ENCODE measurements at regions of chr9 and their contacts with region 1.

Region 1: GRCh38 chr9:127058011-127058644 is 64.3 kb downstream of the ANGPTL2 start:
- DNase-seq: no peak
- ATAC-seq: no peak
- H3K4me3 ChIP-seq: no peak overlapping the region
- H3K27ac ChIP-seq: no peak overlapping the region
- H3K4me1 ChIP-seq: peaks cover 5% of the 10 kb centered on the region
- H3K27me3 ChIP-seq: no peaks in the 10 kb centered on the region
- CTCF ChIP-seq: no peak
- EP300 ChIP-seq: no peak
- POLR2A ChIP-seq: no peak
- RAD21 ChIP-seq: no peak

Region 2: DNA sequence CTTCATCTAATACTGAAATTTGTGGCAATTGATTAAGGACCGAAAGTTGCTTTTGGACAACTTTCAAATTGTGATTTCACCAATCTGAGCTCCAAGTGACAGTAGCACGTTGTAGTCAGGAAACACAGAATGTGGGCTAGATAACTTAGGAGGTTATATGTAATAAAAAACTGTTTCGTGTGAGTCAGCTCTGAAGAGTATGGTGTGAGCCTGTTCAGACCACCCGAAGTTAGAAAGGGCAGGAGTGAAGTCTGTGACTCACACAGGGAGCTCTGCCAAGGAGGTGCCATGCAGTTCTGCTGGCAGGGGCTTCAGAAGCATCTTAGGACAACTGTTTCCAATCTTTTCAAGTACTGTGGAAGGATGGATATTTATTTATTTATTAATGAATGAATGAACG is 214.0 kb before region 1 on chr9:
- CTCF ChIA-PET with region 1: no interaction called
- POLR2A ChIA-PET with region 1: no interaction called
- RAD21 ChIA-PET with region 1: no interaction called
- SMC1A ChIA-PET with region 1: no interaction called
- in situ Hi-C with region 1: no loop called
- intact Hi-C with region 1: no loop called
- DNase-seq: no peak
- ATAC-seq: no peak
- H3K4me3 ChIP-seq: no peak overlapping the region
- H3K27ac ChIP-seq: no peak overlapping the region
- H3K4me1 ChIP-seq: peaks cover 24% of the 10 kb centered on the region
- H3K27me3 ChIP-seq: no peaks in the 10 kb centered on the region
- CTCF ChIP-seq: no peak
- EP300 ChIP-seq: no peak
- POLR2A ChIP-seq: no peak
- RAD21 ChIP-seq: no peak

Region 3: DNA sequence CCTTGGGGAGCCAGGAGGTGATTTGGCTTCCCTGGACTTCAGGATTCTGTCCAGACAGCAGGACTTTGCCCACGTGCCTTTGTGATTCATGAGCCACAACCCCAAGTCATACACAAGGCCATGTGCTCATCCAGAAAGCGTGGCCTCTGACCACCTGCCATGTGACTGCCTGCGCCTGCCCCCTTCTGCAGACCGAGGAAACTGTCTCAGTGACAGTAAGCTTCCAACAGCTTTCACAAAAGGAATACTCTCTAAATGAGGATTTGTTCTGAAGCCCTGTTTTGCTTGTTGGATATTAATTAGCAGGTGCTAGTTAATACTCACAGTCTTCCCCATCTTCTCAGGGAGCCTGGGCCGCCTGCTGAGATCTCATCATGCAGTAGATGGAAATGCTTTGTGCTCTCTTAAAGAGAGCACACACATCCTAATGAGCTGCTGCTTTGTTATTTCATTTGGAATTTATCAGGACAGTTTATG is 101.2 kb after region 1 on chr9:
- CTCF ChIA-PET with region 1: interaction called, 11 read pairs
- POLR2A ChIA-PET with region 1: interaction called, 3 read pairs
- RAD21 ChIA-PET with region 1: interaction called, 16 read pairs
- SMC1A ChIA-PET with region 1: interaction called, 71 read pairs
- in situ Hi-C with region 1: no loop called
- intact Hi-C with region 1: no loop called
- DNase-seq: no peak
- ATAC-seq: peak; percentile 30; the same call in 2 of the 3 replicates
- H3K4me3 ChIP-seq: no peak overlapping the region
- H3K27ac ChIP-seq: no peak overlapping the region
- H3K4me1 ChIP-seq: peaks cover 27% of the 10 kb centered on the region
- H3K27me3 ChIP-seq: no peaks in the 10 kb centered on the region
- CTCF ChIP-seq: peak in 1 of 3 experiments; percentile 16; a peak in 1 of 6 replicates
- EP300 ChIP-seq: no peak
- POLR2A ChIP-seq: no peak
- RAD21 ChIP-seq: no peak; the same call in 1 of the 2 replicates

Region 4: DNA sequence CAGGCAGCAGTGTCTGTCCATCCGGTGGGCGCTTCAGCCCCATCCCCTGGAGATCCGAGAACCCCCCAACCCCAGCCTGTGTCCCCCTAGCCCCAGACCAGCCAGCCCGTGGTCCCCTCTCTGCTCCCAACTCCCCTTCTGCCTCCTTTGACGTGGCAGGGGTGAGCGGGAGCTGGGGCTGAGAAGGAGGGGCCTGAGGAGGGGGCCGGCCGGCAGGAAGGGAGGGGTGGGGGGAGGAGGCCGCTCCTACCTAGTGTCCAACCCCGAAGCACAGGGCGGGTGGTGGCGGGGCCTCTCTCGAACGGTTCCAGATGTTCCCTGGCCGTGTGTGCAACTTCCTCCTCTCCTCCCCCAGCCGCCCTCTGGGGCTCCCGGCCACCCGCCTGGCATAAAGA is 1186.7 kb after region 1 on chr9:
- CTCF ChIA-PET with region 1: no interaction called
- POLR2A ChIA-PET with region 1: no interaction called
- RAD21 ChIA-PET with region 1: no interaction called
- SMC1A ChIA-PET with region 1: no interaction called
- in situ Hi-C with region 1: no loop called
- intact Hi-C with region 1: no loop called
- DNase-seq: no peak
- ATAC-seq: peak; percentile 48
- H3K4me3 ChIP-seq: no peak overlapping the region
- H3K27ac ChIP-seq: no peak overlapping the region
- H3K4me1 ChIP-seq: no peaks in the 10 kb centered on the region
- H3K27me3 ChIP-seq: no peaks in the 10 kb centered on the region
- CTCF ChIP-seq: no peak
- EP300 ChIP-seq: no peak
- POLR2A ChIP-seq: no peak
- RAD21 ChIP-seq: no peak

Measured in GM12878 (cell line).